Breast epithelium (tissue), 4 donors: ENCODE measurements at regions of chr3 and their contacts with region 1.

Region 1: GRCh38 chr3:11803977-11804892 is 42.5 kb downstream of the TAMM41 start:
- DNase-seq: peak in 1 of 2 donors; percentile 24
- H3K4me3 ChIP-seq: no peak overlapping the region
- H3K27ac ChIP-seq: no peak overlapping the region
- H3K4me1 ChIP-seq: no peaks in the 10 kb centered on the region
- H3K27me3 ChIP-seq: no peaks in the 10 kb centered on the region
- CTCF ChIP-seq: peak; percentile 55 to 82 (median 74)
- POLR2A ChIP-seq: no peak

Region 2: GRCh38 chr3:11379233-11379823 is 424.9 kb before region 1 on chr3:
- intact Hi-C with region 1: loop called (anchors 10 kb)
- DNase-seq: no peak
- H3K4me3 ChIP-seq: no peak overlapping the region
- H3K27ac ChIP-seq: no peak overlapping the region
- H3K4me1 ChIP-seq: no peaks in the 10 kb centered on the region
- H3K27me3 ChIP-seq: no peaks in the 10 kb centered on the region
- CTCF ChIP-seq: peak in 2 of 3 donors; percentile 66 to 77
- POLR2A ChIP-seq: no peak

Region 3: DNA sequence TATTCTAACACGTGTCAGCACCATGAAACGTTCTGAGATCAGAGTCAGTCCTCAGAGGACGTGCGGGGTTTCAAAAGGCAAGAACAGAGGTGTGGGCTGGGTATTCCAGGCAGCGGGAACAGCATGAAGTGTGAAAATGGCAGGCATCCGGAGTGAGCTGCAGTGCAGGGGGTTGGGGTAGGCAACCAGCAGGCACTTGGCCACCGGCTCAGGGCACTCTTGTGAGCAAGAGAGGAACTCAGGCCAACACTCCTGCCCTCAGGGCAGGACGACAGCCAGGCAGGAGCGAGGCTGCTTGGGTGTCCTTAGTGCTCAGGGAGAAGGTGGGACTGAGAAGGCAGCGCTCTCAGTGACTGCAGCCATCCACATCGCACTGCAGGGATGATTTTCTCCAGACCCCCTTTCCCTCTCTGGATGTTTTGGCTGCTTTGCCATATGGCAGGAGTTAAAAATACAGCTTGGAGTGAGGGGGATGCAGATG is 1464.8 kb after region 1 on chr3:
- intact Hi-C with region 1: no loop called
- DNase-seq: peak in 1 of 2 donors; percentile 50
- H3K4me3 ChIP-seq: no peak overlapping the region
- H3K27ac ChIP-seq: no peak overlapping the region
- H3K4me1 ChIP-seq: no peaks in the 10 kb centered on the region
- H3K27me3 ChIP-seq: no peaks in the 10 kb centered on the region
- CTCF ChIP-seq: no peak
- POLR2A ChIP-seq: no peak